CD4-positive, alpha-beta memory T cell (primary cell): ENCODE measurements at regions of chr11 and their contacts with region 1.

Region 1: GRCh38 chr11:62370743-62371440 is 33.6 kb downstream of the ASRGL1 start:
- DNase-seq: peak; percentile 24 to 42 (median 37)
- H3K4me3 ChIP-seq: no peak overlapping the region
- H3K4me3 Mint-ChIP-seq: peak overlapping the region in 7 of 8 donors; percentile 52 to 88 (median 64)
- H3K27ac ChIP-seq: no peak overlapping the region
- H3K27ac Mint-ChIP-seq: peak overlapping the region in 5 of 7 donors; percentile 4 to 91 (median 86)
- H3K4me1 ChIP-seq: peaks cover 4% of the 10 kb centered on the region
- H3K4me1 Mint-ChIP-seq: peaks cover 0 to 37% (median 13%) of the 10 kb centered on the region in 4 donors
- H3K27me3 ChIP-seq: no peaks in the 10 kb centered on the region
- H3K27me3 Mint-ChIP-seq: no peaks in the 10 kb centered on the region

Region 2: GRCh38 chr11:62337303-62338181 is 33.4 kb before region 1 on chr11 and contains the start of gene ASRGL1:
- CTCF ChIA-PET with region 1: interaction called, 50 read pairs
- POLR2A ChIA-PET with region 1: interaction called, 3 read pairs
- intact Hi-C with region 1: no loop called
- DNase-seq: peak; percentile 59 to 70 (median 68)
- H3K4me3 ChIP-seq: peak within 1 kb of the TSS; percentile 52 to 54
- H3K4me3 Mint-ChIP-seq: peak within 1 kb of the TSS; percentile 85 to 94 (median 88)
- H3K27ac ChIP-seq: no peak within 1 kb of the TSS
- H3K27ac Mint-ChIP-seq: peak within 1 kb of the TSS in 5 of 7 donors; percentile 15 to 87 (median 72)
- H3K4me1 ChIP-seq: peaks cover 12% of the 10 kb centered on the region
- H3K4me1 Mint-ChIP-seq: peaks cover 5 to 15% (median 11%) of the 10 kb centered on the region in 4 donors
- H3K27me3 ChIP-seq: peaks cover 4% of the 10 kb centered on the region
- H3K27me3 Mint-ChIP-seq: peaks cover 10 to 16% of the 10 kb centered on the region in 2 donors
- total RNA-seq, gene ASRGL1: 1.2 to 2.1 TPM